Cardiac septum (tissue), 1 donor: ENCODE measurements at regions of chr6 and their contacts with region 1.

Region 1: DNA sequence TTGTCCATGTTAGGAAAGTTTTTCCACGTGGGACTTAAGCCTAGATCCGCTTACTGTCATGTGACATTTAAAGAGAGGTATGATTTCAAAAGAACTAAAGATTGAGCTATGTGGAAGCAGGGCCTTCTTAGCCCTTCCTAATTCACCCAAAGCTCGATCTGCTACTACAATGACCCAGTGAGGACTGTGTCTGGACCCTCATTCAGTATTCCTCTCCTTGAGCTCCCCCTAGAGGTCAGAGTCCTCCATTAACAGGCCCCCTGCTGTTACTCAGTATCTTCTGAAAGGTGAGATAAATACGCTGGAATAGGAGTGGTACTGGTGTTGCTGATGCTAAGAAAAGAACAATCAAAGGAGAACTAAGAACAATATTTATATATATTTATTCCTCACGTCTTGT is 414.0 kb downstream of the GJA1 start:
- DNase-seq: no peak

Region 2: DNA sequence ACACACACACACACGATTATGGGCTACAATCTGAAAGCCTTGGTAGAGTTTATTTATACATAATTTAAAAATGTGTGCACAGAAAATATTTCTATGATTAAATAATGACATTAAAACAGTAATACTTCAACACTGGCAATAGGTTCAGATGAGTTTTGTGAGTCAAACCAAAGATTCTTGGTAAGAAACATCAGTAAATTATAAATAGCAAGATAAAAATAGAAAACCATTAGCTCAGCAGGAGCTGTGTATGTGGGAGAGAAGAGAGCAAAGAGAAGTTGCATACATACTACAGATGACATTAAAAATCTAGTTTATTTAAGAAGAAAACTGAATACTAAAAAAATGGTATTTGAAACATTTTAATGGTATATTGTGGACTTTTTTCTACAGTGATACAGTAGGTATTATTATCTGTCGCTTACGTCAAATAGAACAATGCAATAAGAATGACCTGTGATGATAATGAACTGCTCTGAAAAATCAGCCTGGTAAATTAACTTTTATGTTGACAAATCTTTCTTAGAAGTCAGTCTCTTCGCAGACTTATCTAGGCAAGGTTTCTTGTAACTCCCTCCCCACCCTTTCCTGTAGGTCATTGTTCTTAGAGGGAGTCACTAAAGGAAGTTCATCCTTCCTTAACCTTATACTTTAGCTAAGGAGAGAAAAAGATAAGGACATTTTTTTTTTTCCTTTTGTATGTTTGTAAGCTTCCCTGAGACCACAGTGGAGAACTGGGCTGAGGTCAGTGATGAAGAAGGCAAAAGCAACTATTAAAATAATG is 264.7 kb before region 1 on chr6:
- intact Hi-C with region 1: loop called (anchors 10 kb)
- DNase-seq: no peak

Region 3: GRCh38 chr6:121666814-121667213 is 182.7 kb before region 1 on chr6:
- intact Hi-C with region 1: loop called (anchors 5 kb)
- DNase-seq: no peak

Region 4: GRCh38 chr6:121680058-121680457 is 169.4 kb before region 1 on chr6:
- intact Hi-C with region 1: no loop called
- DNase-seq: no peak

Region 5: DNA sequence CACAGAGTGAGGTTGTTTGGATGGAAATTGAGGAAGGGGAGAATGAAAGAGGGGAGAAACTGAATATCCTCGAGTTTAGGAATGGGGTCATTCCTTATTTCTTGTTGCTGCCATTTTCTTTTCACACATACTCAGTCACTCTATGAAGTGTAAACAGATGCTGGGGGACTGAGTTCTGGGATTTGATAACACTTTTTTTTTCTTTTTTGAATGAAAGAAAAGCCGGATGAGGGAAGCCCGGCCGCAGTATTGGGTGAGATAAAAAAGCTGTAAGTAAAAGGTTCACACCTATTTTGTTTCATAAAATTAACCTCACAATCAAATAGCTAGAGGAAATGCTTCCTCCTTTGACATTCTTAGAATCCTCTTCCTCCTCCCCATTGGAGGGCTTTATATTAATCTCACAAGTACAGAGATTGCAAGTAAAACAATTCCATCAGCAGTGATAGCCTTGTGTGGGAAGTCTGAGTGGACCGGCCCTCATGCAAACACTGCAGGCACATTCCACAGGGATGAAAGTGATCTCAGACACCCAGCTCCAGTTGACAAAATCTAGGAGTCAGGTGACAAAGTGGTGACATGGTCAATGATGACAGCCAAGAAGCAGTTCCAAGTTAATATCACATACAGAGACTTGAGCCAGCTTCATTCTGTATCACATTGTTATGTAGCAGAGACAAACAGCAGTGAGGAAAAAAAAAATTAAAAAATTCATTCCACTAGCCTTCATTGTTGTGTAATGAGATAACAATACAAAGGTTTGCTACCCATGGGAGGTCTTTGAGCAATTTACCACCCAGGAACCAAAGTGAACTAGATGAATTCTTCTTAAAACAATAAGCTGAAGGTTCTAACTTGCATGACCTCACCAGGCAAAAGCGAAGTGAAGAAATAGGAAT is 158.9 kb after region 1 on chr6:
- intact Hi-C with region 1: loop called (anchors 10 kb)
- DNase-seq: no peak

Region 6: GRCh38 chr6:122033539-122034181 is 184.2 kb after region 1 on chr6:
- intact Hi-C with region 1: loop called (anchors 5 kb)
- DNase-seq: no peak

Region 7: GRCh38 chr6:122184401-122184827 is 334.9 kb after region 1 on chr6:
- intact Hi-C with region 1: loop called (anchors 5 kb)
- DNase-seq: no peak